ENCODE measurements at regions of chr4 and their contacts with region 1.

Region 1: GRCh38 chr4:89563431-89563830 is 255.8 kb upstream of the GPRIN3 start:
- DNase-seq: no peak
- H3K4me3 Mint-ChIP-seq: no peak overlapping the region
- H3K27ac Mint-ChIP-seq: no peak overlapping the region
- H3K4me1 Mint-ChIP-seq: peaks cover 8% of the 10 kb centered on the region
- H3K27me3 Mint-ChIP-seq: peaks cover 12% of the 10 kb centered on the region

Region 2: DNA sequence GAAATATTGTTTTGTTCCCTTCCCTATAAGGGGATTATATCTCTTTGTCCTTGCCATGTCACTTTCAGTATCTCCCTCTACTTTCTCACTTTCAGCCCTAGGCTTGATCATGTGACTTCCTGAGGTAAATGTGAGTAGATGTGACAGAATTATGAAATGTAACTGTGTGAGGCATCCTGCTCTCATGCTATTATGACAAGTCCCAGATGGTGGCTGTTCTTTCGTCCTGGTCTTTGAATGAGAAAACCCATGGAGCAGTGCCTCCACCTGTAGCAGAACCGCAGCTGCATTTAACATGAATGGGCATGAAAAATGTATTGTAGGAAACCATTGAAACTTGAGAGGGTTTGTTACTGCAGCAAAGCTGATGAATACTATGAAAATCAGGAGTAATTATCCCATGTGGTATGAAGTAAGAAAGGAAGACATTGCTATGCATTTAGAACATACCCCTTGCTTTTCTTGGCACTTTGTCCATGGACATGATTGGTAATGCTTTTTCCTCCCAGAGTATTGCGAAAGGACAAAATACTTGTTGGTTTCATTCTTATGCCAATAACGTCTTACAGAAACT is 53.6 kb before region 1 on chr4:
- intact Hi-C with region 1: loop called (anchors 2 kb)
- DNase-seq: peak; percentile 11
- H3K4me3 Mint-ChIP-seq: no peak overlapping the region
- H3K27ac Mint-ChIP-seq: no peak overlapping the region
- H3K4me1 Mint-ChIP-seq: peaks cover 17% of the 10 kb centered on the region
- H3K27me3 Mint-ChIP-seq: peaks cover 23% of the 10 kb centered on the region

Region 3: DNA sequence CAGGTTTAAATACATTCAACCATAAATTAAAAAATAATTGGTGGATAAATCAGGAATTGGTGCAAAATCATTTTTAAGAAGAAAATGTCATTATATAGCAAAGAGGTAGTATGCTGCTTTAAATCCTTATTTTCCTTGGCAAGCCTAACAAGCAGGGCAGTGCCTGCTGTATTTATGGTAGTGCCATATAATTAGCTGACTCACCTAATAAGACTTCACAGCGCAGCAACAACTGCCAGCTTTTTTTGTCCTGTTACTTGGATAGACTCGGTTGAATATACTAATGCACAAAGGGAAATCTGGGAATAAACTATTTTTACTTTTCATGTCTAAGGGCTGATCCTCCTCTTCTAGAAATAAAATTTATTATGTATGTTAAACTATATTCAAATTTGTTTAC is 174.5 kb after region 1 on chr4:
- intact Hi-C with region 1: no loop called
- DNase-seq: no peak
- H3K4me3 Mint-ChIP-seq: no peak overlapping the region
- H3K27ac Mint-ChIP-seq: no peak overlapping the region
- H3K4me1 Mint-ChIP-seq: no peaks in the 10 kb centered on the region
- H3K27me3 Mint-ChIP-seq: no peaks in the 10 kb centered on the region